ENCODE measurements at regions of chr2 and their contacts with region 1.

Region 1: GRCh38 chr2:20635675-20636584 is 15.0 kb downstream of the HS1BP3 start:
- DNase-seq: peak; percentile 83 to 92 (median 89)
- H3K4me3 ChIP-seq: peak overlapping the region in 25 of 59 donors; percentile 2 to 45 (median 24)
- H3K27ac ChIP-seq: peak overlapping the region in 57 of 59 donors; percentile 1 to 85 (median 73)
- H3K27me3 ChIP-seq: no peaks in the 10 kb centered on the region
- CTCF ChIP-seq: peak; percentile 62 to 99 (median 94)

Region 2: GRCh38 chr2:20525041-20526035 is 110.6 kb before region 1 on chr2:
- intact Hi-C with region 1: loop called in 1 of 2 experiments (anchors 5 kb)
- DNase-seq: no peak
- H3K4me3 ChIP-seq: peak overlapping the region in 2 of 59 donors; percentile 4 to 20
- H3K27ac ChIP-seq: peak overlapping the region in 57 of 59 donors; percentile 6 to 85 (median 68)
- H3K27me3 ChIP-seq: no peaks in the 10 kb centered on the region
- CTCF ChIP-seq: peak in 6 of 56 donors; percentile 4 to 19 (median 12)

Region 3: GRCh38 chr2:20600756-20601325 is 35.1 kb before region 1 on chr2:
- intact Hi-C with region 1: loop called in 1 of 2 experiments (anchors 2 kb)
- DNase-seq: no peak
- H3K4me3 ChIP-seq: peak overlapping the region in 6 of 59 donors; percentile 6 to 32 (median 18)
- H3K27ac ChIP-seq: peak overlapping the region in 58 of 59 donors; percentile 64 to 98 (median 93)
- H3K27me3 ChIP-seq: no peaks in the 10 kb centered on the region
- CTCF ChIP-seq: peak; percentile 24 to 77 (median 54)

Region 4: GRCh38 chr2:20888216-20888615 is 252.3 kb after region 1 on chr2:
- intact Hi-C with region 1: no loop called
- DNase-seq: no peak
- H3K4me3 ChIP-seq: no peak overlapping the region
- H3K27ac ChIP-seq: no peak overlapping the region
- H3K27me3 ChIP-seq: no peaks in the 10 kb centered on the region
- CTCF ChIP-seq: no peak

Measured in dorsolateral prefrontal cortex (tissue), 120 donors.